Activated CD4-positive, alpha-beta memory T cell treated with anti-CD3 and anti-CD28 coated beads, Interleukin-2, amount 10 ng/mL, durations not matched to agents 7 days and 5 days (primary cell): ENCODE measurements at regions of chr20 and their contacts with region 1.

Region 1: DNA sequence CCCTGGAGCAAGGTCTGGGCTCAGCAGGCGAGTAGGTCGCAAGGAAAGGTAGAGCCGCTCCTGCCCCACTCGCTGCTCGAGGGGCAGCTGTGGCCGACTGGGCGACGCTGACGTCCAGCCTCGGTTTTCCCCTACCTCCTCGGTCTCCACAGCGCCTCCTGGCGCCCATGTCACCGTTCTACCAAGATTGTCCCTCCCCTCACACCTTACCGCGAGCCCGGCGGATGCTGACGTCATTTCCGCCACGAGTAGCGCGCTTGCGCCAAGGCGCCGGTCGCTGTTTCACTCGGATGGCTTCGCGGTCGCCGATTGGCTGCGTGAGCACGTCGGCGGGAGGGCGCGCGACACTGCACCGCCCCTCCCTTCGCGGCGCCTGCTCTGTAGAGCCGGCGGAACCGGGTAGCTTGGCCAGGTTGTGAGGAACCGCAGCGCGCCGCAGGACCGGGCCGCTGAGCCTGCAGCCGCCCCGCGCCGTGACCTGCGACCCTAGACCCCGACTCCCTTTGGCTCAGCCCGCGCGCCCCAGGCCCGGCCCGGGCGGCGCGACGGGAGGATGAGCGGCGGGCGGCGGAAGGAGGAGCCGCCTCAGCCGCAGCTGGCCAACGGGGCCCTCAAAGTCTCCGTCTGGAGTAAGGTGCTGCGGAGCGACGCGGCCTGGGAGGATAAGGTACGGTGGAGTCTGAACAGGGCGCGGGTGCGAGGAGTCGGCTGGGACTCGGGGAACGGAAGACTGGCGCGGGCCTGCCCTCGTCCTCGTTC is at the start of gene RAB5IF:
- DNase-seq: peak; percentile 100
- H3K4me3 Mint-ChIP-seq: peak within 1 kb of the TSS; percentile 98
- H3K27ac Mint-ChIP-seq: peak within 1 kb of the TSS; percentile 95
- H3K4me1 Mint-ChIP-seq: peaks cover 35% of the 10 kb centered on the region
- H3K27me3 Mint-ChIP-seq: no peaks in the 10 kb centered on the region
- total RNA-seq, gene RAB5IF: 92.8 to 94.1 TPM

Region 2: GRCh38 chr20:36493013-36493800 is 112.4 kb before region 1 on chr20:
- CTCF ChIA-PET with region 1: interaction called, 8 read pairs
- POLR2A ChIA-PET with region 1: interaction called, 13 read pairs
- DNase-seq: peak; percentile 35
- H3K4me3 Mint-ChIP-seq: no peak overlapping the region
- H3K27ac Mint-ChIP-seq: peak overlapping the region; percentile 34
- H3K4me1 Mint-ChIP-seq: peaks cover 40% of the 10 kb centered on the region
- H3K27me3 Mint-ChIP-seq: no peaks in the 10 kb centered on the region

Region 3: GRCh38 chr20:36541227-36541763 is 64.3 kb before region 1 on chr20 and contains the start of gene MYL9:
- CTCF ChIA-PET with region 1: no interaction called
- POLR2A ChIA-PET with region 1: no interaction called
- DNase-seq: no peak
- H3K4me3 Mint-ChIP-seq: no peak within 1 kb of the TSS
- H3K27ac Mint-ChIP-seq: no peak within 1 kb of the TSS
- H3K4me1 Mint-ChIP-seq: no peaks in the 10 kb centered on the region
- H3K27me3 Mint-ChIP-seq: peaks cover 1% of the 10 kb centered on the region
- total RNA-seq, gene MYL9: 1.1 to 1.7 TPM

Region 4: GRCh38 chr20:36578356-36579041 is 27.1 kb before region 1 on chr20:
- CTCF ChIA-PET with region 1: interaction called, 18 read pairs
- POLR2A ChIA-PET with region 1: interaction called, 113 read pairs
- DNase-seq: no peak
- H3K4me3 Mint-ChIP-seq: no peak overlapping the region
- H3K27ac Mint-ChIP-seq: no peak overlapping the region
- H3K4me1 Mint-ChIP-seq: peaks cover 45% of the 10 kb centered on the region
- H3K27me3 Mint-ChIP-seq: no peaks in the 10 kb centered on the region

Region 5: GRCh38 chr20:36591854-36592641 is 13.5 kb before region 1 on chr20:
- CTCF ChIA-PET with region 1: interaction called, 75 read pairs
- POLR2A ChIA-PET with region 1: interaction called, 123 read pairs
- DNase-seq: peak; percentile 65
- H3K4me3 Mint-ChIP-seq: no peak overlapping the region
- H3K27ac Mint-ChIP-seq: peak overlapping the region; percentile 76
- H3K4me1 Mint-ChIP-seq: peaks cover 61% of the 10 kb centered on the region
- H3K27me3 Mint-ChIP-seq: no peaks in the 10 kb centered on the region

Region 6: DNA sequence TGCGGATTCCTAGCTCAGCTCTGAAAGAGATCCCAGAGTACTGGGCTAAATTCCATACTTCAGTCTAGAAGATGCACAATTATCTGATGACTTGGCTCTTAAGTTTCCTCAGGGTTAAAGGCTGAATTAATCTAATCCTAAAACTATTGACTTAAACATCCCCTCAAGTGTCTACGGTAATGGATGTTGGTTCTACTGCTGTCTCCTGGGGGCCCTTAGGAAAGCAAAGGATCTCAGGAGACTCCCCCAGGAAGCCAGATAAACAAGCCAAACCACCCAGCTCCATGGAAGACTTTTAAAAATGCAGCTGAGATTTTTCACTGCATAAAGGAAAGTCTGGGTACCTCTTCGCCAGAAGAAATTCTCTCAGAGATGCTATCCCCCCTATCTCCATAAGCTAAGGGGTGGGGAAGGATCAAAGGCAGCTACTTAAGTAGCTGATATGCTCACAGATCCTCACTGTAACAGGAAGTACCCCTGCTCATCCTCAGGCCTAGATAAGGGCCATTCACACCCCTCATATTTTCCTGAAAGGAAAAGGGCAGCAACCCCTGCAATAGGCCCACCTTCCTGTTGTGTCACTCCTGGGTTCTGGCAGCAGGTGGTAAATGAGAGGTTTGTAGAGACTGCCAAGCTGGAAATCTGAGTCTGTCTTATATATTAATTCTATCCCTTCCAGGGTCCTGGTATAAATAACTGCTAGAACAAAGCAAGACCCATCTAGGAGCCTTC is 131.0 kb after region 1 on chr20:
- CTCF ChIA-PET with region 1: interaction called, 6 read pairs
- POLR2A ChIA-PET with region 1: interaction called, 16 read pairs
- DNase-seq: no peak
- H3K4me3 Mint-ChIP-seq: no peak overlapping the region
- H3K27ac Mint-ChIP-seq: no peak overlapping the region
- H3K4me1 Mint-ChIP-seq: peaks cover 30% of the 10 kb centered on the region
- H3K27me3 Mint-ChIP-seq: no peaks in the 10 kb centered on the region